Cardiac septum (tissue), 1 donor: ENCODE measurements at regions of chr5 and their contacts with region 1.

Region 1: DNA sequence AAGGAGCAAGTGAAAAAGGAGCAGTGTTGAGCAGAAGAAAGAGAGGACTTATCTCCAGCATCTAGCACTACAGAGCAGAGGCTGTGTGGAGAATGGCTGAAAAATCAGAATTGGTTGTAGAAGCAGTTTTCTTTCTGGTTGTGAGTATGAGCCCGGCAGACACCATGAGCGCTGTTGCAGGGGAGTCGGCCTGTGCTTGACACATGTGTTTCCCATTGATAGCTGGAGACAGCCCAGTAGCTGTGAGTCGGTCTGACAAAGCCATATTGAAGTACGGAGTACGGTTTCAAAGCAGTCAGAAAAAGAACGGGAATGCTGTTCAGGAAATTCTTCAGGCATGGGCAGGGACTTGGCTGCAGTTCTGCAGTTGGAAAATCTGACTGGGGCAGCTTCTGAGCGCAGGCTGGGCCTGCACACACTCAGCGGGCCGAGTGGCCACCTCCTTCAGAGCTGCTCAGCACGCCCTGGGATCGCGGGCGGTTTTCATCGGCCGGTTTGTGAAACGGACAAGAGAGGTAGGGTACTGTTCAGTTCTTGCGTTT is at the start of gene SGCD:
- DNase-seq: peak; percentile 86
- total RNA-seq, gene SGCD: 83.1 TPM

Region 2: DNA sequence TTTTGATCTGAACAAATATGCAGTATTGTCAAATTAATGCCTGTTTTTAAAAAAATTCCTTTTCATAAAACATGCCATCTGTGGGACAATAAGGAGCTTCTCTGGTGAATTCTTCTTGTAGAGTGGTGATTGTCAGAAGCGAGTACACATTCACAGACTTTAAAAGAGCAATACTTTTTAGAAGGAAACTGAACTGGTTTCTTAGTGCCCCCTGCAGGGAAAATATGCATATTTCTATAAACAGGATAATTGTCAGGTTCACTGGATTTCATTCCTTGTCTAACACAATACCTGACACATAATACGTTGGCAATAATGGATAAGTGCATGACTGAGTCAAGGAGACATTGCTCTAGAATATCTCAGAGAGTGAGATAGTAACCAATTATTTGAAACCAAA is 1179.6 kb before region 1 on chr5:
- intact Hi-C with region 1: no loop called
- DNase-seq: no peak

Region 3: DNA sequence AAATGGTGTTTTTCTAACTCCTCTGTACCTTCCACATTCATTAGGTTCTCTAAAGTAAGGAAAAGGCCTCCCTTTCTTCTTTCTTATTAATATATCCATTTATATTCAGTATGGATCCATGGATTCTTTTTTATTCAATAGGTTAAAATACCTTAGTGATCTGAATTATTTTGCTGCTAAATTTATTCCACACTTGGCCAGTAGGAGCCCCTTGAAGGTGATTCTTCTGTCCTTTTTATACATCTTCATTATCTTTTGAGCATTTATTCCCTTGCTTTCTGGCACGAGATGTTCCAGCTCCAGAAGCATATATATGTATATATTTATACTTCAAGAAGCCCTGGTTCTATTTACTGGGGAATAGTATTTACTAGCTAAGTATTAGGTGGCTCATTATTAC is 311.7 kb before region 1 on chr5:
- intact Hi-C with region 1: no loop called
- DNase-seq: no peak

Region 4: GRCh38 chr5:156497804-156498208 is 171.0 kb after region 1 on chr5:
- intact Hi-C with region 1: loop called (anchors 5 kb)
- DNase-seq: no peak

Region 5: DNA sequence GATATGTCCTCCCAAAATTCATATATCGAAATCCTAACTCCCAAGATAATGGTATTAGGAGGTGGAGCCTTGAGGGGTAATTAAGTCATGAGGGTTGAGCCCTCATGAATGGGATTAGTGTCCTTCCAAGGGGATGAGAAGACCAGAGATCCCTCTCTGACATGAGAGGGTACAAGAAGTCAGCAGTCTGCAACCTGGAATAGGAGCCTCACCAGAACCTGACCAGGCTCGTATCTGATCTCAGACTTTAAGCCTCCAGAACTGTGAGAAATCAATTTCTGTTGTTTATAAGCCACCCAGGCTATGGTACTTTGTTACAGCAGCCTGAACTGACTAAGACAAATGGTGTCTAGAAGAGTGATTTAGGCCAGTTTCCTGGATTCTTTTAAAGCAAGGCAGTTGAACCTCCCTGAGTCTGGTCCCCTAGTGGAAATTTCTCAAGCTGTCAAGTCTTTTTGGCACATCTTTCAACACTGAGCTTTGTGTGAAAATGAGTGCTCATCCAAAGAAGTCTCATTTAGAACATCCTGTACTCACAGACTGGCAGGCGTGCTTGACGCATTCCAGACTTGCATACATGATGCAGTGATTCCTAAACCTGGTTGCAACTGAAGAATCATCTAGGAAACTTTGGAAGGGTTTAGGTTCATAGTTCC is 268.5 kb after region 1 on chr5:
- intact Hi-C with region 1: loop called (anchors 10 kb)
- DNase-seq: no peak